Gastrocnemius medialis (tissue), 4 donors: ENCODE measurements at regions of chr14 and their contacts with region 1.

Region 1: GRCh38 chr14:54579621-54580020 is 12.7 kb downstream of the SAMD4A start:
- DNase-seq: no peak
- ATAC-seq: no peak
- H3K4me3 ChIP-seq: no peak overlapping the region
- H3K27ac ChIP-seq: peak overlapping the region in 1 of 4 donors; percentile 43
- H3K4me1 ChIP-seq: peaks cover 48 to 57% of the 10 kb centered on the region in 2 donors
- H3K27me3 ChIP-seq: no peaks in the 10 kb centered on the region
- CTCF ChIP-seq: no peak
- POLR2A ChIP-seq: no peak

Region 2: GRCh38 chr14:54299410-54300363 is 279.9 kb before region 1 on chr14:
- in situ Hi-C with region 1: no loop called
- intact Hi-C with region 1: no loop called
- DNase-seq: no peak
- ATAC-seq: no peak
- H3K4me3 ChIP-seq: no peak overlapping the region
- H3K27ac ChIP-seq: no peak overlapping the region
- H3K4me1 ChIP-seq: no peaks in the 10 kb centered on the region
- H3K27me3 ChIP-seq: no peaks in the 10 kb centered on the region
- CTCF ChIP-seq: no peak
- POLR2A ChIP-seq: no peak

Region 3: DNA sequence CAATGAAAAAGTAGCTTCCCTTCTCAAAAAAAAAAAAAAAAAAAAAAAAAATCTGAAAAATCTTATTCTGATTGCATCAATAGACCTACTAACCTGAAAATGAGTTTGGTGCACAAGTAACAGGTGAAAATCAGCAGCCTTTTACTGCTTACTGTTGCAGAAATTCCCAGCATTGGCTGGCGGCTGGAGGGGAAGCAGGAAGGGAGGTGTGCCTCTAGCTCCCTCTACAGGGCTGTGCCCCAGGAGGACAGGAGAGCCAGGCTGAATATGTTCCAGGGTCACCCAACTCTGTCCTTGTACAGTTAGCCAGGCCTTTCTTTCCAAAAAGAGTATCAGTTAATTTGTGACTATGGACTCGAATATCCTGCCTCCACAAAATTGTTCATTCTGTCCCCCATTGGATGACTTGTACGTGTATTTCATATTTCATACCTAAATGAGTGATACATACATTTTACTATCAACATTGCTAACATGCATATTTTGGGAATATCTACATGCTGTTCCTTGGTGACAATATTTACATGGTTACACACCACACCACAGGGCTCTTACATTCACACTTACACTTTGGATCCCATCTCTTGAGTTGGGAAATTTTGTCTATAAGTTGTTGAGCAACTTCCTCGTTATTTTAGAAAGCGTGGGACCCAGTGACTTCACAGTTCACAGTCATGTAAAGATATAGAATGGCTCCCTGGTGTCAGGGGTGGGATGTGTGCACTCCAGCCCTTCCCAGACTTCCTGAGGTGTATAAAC is 112.1 kb after region 1 on chr14:
- in situ Hi-C with region 1: loop called in 2 of 4 experiments (anchors 5 to 10 kb)
- intact Hi-C with region 1: no loop called
- DNase-seq: peak; percentile 63 to 84
- ATAC-seq: peak; percentile 53 to 71
- H3K4me3 ChIP-seq: no peak overlapping the region
- H3K27ac ChIP-seq: peak overlapping the region; percentile 86 to 99 (median 92)
- H3K4me1 ChIP-seq: peaks cover 62 to 68% of the 10 kb centered on the region in 2 donors
- H3K27me3 ChIP-seq: no peaks in the 10 kb centered on the region
- CTCF ChIP-seq: peak; percentile 82 to 92 (median 89)
- POLR2A ChIP-seq: no peak

Region 4: DNA sequence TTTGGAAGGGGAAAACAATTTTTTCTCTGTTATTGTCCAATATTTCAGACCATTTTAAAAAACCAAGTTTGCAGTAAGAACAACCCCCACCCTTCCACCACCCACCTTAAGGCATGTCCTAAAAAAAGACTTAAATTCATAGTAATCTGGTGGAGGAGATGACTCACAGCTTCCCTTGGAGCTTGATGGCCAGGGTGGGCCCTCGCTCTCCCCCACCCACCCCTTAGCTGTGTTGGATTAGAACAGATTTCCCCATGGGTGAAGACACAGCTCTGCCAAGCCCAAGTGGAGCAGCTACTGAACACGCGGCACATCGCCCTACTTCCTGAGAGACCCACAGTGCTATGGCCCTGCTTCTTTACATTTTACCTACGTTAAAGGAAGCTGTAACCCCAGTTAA is 182.7 kb after region 1 on chr14:
- in situ Hi-C with region 1: no loop called
- intact Hi-C with region 1: no loop called
- DNase-seq: no peak
- ATAC-seq: no peak
- H3K4me3 ChIP-seq: no peak overlapping the region
- H3K27ac ChIP-seq: peak overlapping the region in 3 of 4 donors; percentile 21 to 56 (median 37)
- H3K4me1 ChIP-seq: peaks cover 13 to 17% of the 10 kb centered on the region in 2 donors
- H3K27me3 ChIP-seq: no peaks in the 10 kb centered on the region
- CTCF ChIP-seq: no peak
- POLR2A ChIP-seq: no peak